Breast epithelium (tissue), 4 donors: ENCODE measurements at regions of chr4 and their contacts with region 1.

Region 1: DNA sequence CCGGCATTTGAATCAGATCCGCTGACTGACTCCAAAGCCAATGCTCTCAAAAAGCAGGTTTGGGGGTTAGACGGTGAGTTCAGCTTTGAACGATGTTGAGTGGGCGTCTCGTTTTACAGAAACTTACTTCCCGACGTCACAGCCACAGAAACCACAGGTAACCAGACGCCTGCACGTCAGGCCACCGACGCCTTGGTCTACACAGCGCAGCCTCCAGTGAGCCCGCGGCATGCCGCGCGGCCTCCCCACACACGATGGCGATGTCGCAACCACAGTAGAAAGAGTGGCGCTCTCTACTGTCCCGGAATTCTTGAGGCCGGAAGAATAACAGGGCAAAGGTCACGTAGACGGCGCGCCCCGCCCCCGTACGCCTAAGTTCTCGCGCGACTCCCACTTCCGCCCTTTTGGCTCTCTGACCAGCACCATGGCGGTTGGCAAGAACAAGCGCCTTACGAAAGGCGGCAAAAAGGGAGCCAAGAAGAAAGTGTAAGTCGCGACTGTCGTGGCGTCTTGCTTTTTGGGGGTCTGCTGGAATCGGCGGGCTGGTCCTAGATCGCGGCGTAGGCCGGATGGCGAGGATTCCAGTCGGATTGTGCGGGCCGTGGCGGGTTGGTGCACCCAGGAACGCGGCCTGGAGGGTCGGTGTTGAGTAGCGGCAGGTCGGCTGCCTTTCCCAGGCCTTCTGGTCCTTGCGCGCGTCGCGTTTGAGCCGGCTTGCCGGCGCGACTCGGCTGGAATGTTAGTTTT is at the start of gene RPS3A:
- DNase-seq: peak; percentile 96
- H3K4me3 ChIP-seq: peak within 1 kb of the TSS; percentile 82 to 88 (median 84)
- H3K27ac ChIP-seq: peak within 1 kb of the TSS; percentile 97 to 99
- H3K4me1 ChIP-seq: peaks cover 0 to 11% of the 10 kb centered on the region in 2 donors
- H3K27me3 ChIP-seq: no peaks in the 10 kb centered on the region
- CTCF ChIP-seq: peak; percentile 20 to 69 (median 64)
- POLR2A ChIP-seq: peak; percentile 62
- total RNA-seq, gene RPS3A: 3,228 to 5,074 (median 4,710) TPM

Region 2: DNA sequence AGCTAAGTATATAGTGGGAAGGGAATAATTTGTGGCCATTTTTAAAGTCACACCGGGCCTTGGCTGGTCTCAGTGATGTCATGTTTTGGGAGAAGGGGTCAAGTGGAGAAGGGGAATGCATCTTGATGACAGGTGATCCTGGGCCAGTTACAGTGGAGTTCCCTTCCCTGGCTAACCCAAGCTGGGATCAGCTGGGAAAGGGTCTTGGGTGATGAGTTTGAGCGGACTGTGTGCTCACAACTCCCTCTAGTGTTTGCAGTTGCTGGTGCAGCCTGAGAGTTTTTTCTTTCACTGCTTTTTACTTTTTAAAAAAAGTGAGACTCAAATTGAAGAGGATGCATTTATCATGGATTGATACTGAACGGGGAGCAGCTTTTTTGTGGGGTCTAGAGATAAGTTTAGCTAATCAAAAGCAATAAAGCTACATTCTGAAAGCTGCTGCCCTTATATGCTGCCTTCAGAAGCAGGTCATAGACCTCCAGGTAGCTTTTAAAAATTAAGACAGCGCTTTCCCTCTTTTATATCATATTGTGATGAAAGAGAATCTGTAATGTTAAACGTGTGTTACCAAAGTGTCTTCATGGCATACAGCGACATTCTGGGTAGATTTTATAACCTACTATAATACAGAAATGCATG is 856.5 kb before region 1 on chr4:
- intact Hi-C with region 1: loop called (anchors 5 kb)
- DNase-seq: no peak
- H3K4me3 ChIP-seq: no peak overlapping the region
- H3K27ac ChIP-seq: no peak overlapping the region
- H3K4me1 ChIP-seq: no peaks in the 10 kb centered on the region
- H3K27me3 ChIP-seq: no peaks in the 10 kb centered on the region
- CTCF ChIP-seq: peak; percentile 41 to 71 (median 66)
- POLR2A ChIP-seq: no peak

Region 3: DNA sequence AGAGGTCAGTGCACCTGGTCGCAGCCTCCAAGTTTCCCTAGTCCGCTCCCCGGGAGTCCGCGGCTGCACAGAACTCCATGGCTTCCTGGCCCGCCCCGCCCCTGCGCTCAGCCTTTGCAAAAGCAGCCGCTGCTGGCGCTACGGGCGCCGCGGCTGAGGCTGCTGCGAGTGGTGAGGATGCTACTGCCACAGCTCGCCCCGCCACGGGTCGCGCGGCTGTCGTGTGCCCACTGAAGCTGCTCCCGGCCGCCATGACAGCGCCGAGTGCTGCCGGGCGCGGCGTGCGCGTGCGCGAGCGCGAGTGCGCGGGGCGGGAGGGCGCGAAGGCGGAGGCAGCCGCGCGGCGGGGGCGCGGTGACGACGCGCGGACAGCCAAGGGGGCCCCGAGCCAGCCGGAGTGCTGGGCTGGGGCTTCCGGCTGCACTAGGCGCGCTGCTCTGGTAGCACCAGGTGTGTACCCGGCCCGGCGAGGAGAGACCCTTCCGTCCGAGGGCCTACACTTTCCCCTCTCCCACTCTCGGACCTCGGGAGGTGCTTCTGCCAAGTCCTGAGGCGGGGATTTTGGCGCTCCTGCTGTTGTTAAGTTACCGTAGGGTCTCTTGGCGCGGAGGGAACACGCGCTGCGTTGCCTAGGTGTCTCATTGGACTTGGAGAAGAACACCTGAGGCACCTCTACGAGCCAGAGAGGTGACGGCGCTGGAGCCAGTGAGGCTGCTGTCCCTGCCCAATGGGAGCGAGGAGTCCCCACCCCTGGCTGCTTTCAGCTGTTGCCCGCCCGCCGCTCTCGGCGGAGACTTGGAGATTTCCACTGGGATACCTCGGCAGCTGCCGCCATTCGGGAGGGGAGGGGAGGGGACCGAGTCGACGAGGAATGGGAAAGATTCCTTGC is 83.7 kb before region 1 on chr4:
- intact Hi-C with region 1: loop called (anchors 10 kb)
- DNase-seq: peak; percentile 84
- H3K4me3 ChIP-seq: peak overlapping the region; percentile 94 to 99 (median 97)
- H3K27ac ChIP-seq: peak overlapping the region; percentile 97
- H3K4me1 ChIP-seq: peaks cover 0 to 3% of the 10 kb centered on the region in 2 donors
- H3K27me3 ChIP-seq: no peaks in the 10 kb centered on the region
- CTCF ChIP-seq: no peak
- POLR2A ChIP-seq: no peak

Region 4: GRCh38 chr4:151052785-151053184 is 46.6 kb before region 1 on chr4:
- intact Hi-C with region 1: no loop called
- DNase-seq: no peak
- H3K4me3 ChIP-seq: no peak overlapping the region
- H3K27ac ChIP-seq: no peak overlapping the region
- H3K4me1 ChIP-seq: no peaks in the 10 kb centered on the region
- H3K27me3 ChIP-seq: no peaks in the 10 kb centered on the region
- CTCF ChIP-seq: no peak
- POLR2A ChIP-seq: no peak